AG04450 (cell line): ENCODE measurements at regions of chr12 and their contacts with region 1.

Region 1: GRCh38 chr12:115752913-115753726 is 524.4 kb downstream of the MED13L start:
- DNase-seq: peak; percentile 48
- H3K4me3 ChIP-seq: no peak overlapping the region
- H3K27ac ChIP-seq: no peak overlapping the region
- H3K27me3 ChIP-seq: no peaks in the 10 kb centered on the region
- CTCF ChIP-seq: peak; percentile 79

Region 2: DNA sequence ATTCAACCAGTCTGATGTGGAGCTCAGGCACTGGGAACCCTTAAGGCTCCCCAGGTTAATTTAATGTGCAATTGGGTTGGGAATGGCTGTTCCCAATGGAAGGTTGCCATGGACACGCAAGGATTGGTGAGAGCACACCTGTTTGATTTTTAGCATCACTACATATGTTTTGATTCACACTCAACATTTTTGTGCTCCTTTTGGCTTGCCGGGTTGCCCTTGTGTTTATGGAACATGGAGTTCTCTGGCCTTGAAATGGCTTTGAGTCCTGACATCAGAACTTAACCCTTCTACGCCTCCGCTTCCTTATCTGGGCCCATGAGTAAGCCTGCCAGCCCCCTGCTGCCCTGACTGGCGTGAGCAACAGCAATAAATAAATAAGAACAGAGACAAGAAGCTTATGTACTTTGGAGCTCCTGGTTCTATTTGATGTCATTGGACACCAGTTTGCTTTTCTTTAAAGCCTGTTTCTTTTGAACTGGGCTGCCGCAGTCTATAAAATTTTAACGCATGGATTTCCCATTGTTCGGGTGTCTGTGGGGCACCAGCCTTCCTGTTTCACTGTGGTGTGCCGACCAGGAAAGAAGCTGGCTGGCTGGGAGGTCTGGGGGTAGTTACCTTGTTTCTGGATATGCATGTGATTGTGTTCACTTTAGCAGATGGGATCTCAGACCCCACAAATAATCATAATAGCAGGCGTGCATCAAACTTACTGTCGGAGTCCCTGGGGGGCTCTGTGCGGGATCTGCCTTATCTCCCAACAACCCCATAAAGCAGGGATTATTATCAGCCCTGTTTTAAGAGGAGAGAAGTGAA is 1097.0 kb before region 1 on chr12:
- CTCF ChIA-PET with region 1: interaction called, 75 read pairs
- POLR2A ChIA-PET with region 1: no interaction called
- DNase-seq: peak; percentile 78
- H3K4me3 ChIP-seq: no peak overlapping the region
- H3K27ac ChIP-seq: peak overlapping the region; percentile 54
- H3K27me3 ChIP-seq: no peaks in the 10 kb centered on the region
- CTCF ChIP-seq: no peak

Region 3: GRCh38 chr12:114662512-114663177 is 1090.5 kb before region 1 on chr12:
- CTCF ChIA-PET with region 1: interaction called, 75 read pairs
- POLR2A ChIA-PET with region 1: interaction called, 3 read pairs
- DNase-seq: no peak
- H3K4me3 ChIP-seq: no peak overlapping the region
- H3K27ac ChIP-seq: no peak overlapping the region
- H3K27me3 ChIP-seq: no peaks in the 10 kb centered on the region
- CTCF ChIP-seq: peak; percentile 94

Region 4: DNA sequence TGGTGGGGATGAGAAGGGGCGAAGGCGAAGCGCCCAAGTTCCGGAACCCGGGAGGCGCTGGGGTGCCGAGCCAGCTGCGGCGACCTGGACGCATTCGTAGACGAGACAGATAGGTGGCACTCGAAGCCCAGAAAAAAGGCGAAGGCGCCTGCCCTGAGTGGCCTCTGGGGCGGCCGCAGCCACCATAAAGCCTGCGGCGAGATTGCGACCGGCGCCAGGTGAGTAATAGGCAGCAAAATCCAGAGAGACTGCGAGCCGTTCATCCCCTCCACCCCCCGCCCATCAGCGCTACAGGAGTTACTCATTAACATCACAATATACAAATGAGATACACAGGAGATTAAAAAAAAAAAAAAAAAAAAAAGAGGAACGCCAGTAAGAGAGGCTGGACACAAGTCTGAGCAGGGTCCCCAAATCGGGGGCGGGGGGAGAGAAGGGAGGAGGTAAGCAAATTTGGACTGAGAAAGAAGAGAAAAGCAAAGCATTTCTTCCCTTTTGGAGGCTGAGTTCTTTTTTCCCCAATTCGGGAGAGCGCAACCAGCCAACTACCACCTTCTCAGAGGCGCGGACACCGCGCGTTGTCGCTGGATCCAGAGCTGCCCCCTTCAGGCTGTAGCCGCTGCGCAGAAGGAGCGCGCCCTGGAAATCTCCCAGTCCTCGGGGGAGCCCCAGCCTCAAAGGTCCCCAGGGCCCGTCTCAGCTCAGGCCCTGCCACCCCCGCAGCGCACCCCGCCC is 1084.8 kb before region 1 on chr12:
- CTCF ChIA-PET with region 1: interaction called, 75 read pairs
- POLR2A ChIA-PET with region 1: interaction called, 4 read pairs
- DNase-seq: no peak
- H3K4me3 ChIP-seq: peak overlapping the region; percentile 59
- H3K27ac ChIP-seq: peak overlapping the region; percentile 95
- H3K27me3 ChIP-seq: no peaks in the 10 kb centered on the region
- CTCF ChIP-seq: peak; percentile 55

Region 5: DNA sequence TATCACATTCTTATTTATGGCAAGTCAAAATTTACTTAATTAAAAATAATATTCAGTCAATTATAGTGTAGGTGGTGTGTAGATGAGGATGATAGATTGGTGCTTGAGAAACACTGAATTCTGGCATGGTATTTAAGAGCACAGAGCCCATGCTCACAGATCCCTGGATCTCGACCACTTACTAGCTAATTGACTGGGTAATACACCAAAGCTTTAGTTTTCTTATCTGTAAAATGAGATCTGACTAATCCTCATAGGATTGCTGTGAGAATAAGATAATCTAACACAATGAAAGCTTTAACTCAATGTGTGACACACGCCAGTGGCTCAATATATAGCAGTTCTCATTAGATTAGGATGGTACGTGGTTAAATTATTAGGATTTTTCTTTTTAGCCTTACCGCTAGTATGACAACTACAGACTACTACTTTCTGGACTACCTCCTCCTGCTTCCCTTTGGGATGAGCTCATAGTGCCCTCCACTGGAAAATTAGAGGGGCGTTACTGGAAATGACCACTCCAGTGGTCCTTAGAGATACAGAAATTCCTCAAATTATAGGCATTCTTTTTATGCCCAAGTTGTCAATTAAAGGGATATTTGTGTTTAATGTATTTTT is 586.3 kb before region 1 on chr12:
- CTCF ChIA-PET with region 1: interaction called, 16 read pairs
- POLR2A ChIA-PET with region 1: no interaction called
- DNase-seq: peak; percentile 4
- H3K4me3 ChIP-seq: no peak overlapping the region
- H3K27ac ChIP-seq: no peak overlapping the region
- H3K27me3 ChIP-seq: no peaks in the 10 kb centered on the region
- CTCF ChIP-seq: peak; percentile 41

Region 6: GRCh38 chr12:115763376-115763775 is 10.3 kb after region 1 on chr12:
- CTCF ChIA-PET with region 1: interaction called, 19 read pairs
- POLR2A ChIA-PET with region 1: no interaction called
- DNase-seq: no peak
- H3K4me3 ChIP-seq: no peak overlapping the region
- H3K27ac ChIP-seq: no peak overlapping the region
- H3K27me3 ChIP-seq: peaks cover 3% of the 10 kb centered on the region
- CTCF ChIP-seq: no peak